ENCODE measurements at regions of chr12 and their contacts with region 1.

Region 1: GRCh38 chr12:12786716-12787601 is 1.5 kb downstream of the APOLD1 start:
- DNase-seq: peak; percentile 75
- H3K4me3 Mint-ChIP-seq: peak overlapping the region; percentile 81
- H3K27ac Mint-ChIP-seq: peak overlapping the region; percentile 75
- H3K4me1 Mint-ChIP-seq: peaks cover 5% of the 10 kb centered on the region
- H3K27me3 Mint-ChIP-seq: no peaks in the 10 kb centered on the region
- CTCF ChIP-seq: peak; percentile 17

Region 2: DNA sequence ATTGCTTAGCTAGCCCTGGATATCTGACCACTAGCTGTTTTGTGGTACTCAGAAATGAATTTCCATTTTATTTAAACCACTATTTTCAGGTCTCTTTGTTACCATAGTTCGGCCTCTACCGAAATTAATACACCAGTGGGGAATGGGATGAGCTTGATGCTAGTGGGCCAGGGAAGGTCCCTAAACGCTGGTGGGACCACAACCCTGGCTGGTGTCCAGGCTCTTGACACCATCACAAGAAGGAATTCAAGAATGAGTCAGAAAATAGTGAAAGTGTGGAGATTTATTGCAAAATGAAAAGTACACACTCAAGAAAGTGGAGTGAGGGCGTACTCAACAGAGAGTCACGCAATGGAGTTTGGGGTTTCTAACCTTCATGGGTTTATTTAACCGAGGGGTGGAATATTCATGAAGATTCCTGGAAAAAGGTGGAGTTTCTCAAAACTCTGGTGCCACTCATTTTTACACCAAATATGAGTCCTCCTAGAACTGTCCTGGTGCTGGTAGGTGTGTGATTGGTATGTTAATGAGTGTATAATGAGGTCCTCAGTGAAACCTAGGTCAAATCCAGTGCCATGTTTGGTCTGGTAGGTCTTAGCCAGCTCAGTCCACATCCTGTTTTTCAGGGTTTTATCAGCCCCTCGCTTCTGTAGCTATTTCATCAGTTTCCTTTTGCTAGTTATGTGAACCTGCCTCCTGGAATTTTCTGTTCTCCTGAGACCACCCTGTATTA is 481.2 kb before region 1 on chr12:
- CTCF ChIA-PET with region 1: no interaction called
- POLR2A ChIA-PET with region 1: no interaction called
- intact Hi-C with region 1: no loop called
- DNase-seq: no peak
- H3K4me3 Mint-ChIP-seq: no peak overlapping the region
- H3K27ac Mint-ChIP-seq: no peak overlapping the region
- H3K4me1 Mint-ChIP-seq: no peaks in the 10 kb centered on the region
- H3K27me3 Mint-ChIP-seq: no peaks in the 10 kb centered on the region
- CTCF ChIP-seq: no peak

Region 3: DNA sequence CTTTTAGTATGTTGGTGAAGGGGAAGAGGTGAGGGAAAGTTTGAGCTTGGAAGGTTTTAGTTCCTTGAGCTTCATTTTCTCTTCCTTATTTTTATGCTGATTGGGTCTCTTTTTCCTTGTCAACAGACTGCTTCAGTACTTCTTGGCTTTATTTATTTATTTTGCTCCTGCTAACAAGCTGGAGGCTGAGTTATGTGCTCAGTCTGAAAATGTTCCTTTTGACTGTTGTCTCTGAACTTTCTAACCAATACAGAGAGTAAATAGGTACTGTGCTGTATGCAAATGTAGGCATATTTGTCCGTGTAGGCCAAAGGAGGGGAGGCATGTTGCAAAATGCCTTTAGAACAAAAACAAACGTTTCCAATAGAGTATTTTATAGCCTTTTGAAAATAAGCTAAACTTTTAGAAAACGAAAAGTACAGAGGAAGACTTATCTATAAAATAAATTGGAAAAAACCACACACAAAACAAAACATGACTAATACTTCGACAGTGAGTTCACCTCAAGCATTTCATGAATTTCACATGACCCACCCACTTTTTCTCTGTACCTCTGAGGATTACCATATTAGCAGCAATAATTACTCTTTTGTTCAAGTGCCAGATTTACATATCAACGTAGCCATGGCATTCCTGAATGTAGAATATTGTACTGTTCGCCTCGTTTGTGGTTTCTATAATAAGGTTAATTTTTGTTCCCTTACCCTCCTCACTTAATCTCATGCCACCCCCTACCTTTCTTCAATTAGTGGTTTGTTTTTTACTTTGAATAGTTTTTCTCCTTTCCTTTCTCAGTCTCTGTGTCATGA is 180.0 kb before region 1 on chr12:
- CTCF ChIA-PET with region 1: no interaction called
- POLR2A ChIA-PET with region 1: no interaction called
- intact Hi-C with region 1: no loop called
- DNase-seq: peak; percentile 46
- H3K4me3 Mint-ChIP-seq: peak overlapping the region; percentile 2
- H3K27ac Mint-ChIP-seq: peak overlapping the region; percentile 66
- H3K4me1 Mint-ChIP-seq: peaks cover 19% of the 10 kb centered on the region
- H3K27me3 Mint-ChIP-seq: no peaks in the 10 kb centered on the region
- CTCF ChIP-seq: no peak

Region 4: DNA sequence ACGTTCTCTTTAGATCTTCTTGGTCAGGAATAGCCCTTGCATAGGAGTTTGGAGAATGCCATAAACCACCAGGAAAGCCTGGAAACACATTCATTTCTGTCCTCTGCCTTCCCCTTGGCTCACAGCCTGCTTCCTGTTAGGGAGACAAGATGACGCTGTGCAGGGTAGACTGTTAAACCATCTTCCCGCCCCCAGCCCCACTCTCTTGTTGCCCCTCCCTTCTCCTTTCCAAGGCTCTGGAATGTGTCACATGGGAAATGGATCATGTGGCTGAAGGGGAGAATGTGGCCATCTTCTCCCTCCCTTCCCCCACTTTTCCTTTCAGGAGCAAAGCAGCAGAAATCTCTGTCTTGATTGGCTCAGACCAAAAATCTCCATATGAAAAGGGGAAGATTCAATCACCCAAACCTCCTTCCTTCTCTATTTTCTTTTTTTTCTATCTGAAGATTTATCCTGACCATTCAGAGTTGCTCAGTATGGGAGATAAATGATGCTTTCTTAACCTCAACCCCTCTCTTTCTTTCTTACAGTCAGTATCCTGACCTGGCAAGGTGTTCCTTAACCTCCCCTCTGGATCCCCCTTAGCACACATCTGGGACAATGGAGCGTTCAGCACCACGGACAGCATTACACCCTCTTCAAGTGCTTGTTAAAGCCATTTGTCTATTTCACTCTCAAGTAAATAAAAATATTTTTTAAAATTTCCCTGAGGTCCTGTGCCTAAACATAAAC is 102.4 kb before region 1 on chr12:
- CTCF ChIA-PET with region 1: no interaction called
- POLR2A ChIA-PET with region 1: no interaction called
- intact Hi-C with region 1: no loop called
- DNase-seq: peak; percentile 59
- H3K4me3 Mint-ChIP-seq: no peak overlapping the region
- H3K27ac Mint-ChIP-seq: no peak overlapping the region
- H3K4me1 Mint-ChIP-seq: no peaks in the 10 kb centered on the region
- H3K27me3 Mint-ChIP-seq: no peaks in the 10 kb centered on the region
- CTCF ChIP-seq: no peak

Region 5: DNA sequence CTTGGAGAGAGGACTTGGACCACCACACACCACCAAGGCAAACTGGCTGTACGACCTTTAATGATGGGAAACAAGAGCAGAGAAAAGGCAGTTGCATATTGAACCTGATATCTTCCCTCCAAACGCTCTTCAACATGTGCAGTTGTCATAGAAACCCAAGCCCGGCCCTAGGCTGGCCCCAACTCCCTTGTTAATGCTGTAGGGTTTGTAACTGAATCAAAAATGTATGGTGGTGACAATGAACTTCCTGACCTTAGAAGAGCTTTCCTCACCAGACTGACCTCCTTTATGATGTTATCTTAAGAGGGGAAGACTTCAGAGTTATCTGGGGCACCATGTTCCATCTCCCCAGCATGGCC is 10.8 kb after region 1 on chr12:
- CTCF ChIA-PET with region 1: interaction called, 62 read pairs
- POLR2A ChIA-PET with region 1: interaction called, 41 read pairs
- intact Hi-C with region 1: no loop called
- DNase-seq: no peak
- H3K4me3 Mint-ChIP-seq: no peak overlapping the region
- H3K27ac Mint-ChIP-seq: no peak overlapping the region
- H3K4me1 Mint-ChIP-seq: peaks cover 14% of the 10 kb centered on the region
- H3K27me3 Mint-ChIP-seq: no peaks in the 10 kb centered on the region
- CTCF ChIP-seq: no peak

Region 6: DNA sequence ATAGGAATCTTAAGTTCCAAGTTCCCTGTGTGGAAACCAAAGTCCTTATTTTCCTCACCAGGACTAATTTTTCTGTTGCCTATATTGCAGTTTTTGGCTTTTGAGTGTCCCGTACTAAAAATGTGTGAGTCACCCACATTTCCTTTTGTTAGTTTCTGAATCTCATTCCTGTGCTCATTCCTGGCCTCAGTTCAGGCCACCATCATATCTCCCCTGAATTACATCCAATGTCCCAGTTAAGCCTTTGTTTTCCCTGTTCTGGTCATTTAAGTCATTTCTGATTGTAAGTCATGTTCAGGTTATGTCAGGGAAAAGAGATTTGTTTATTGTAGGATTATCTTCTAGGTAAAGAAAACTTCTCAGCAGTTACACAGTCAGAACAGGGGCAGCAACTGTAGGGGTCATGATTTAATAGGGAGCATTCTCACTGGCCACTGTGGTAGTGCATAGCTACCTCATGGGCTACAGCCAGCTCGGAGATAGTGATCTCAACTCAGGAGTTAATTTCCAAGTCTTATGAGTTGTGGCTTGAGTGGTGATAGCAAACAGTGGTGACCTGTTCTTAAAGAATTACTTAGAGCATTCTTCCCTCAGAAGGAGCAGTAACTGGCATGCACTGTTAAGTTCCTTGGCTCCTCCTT is 32.8 kb after region 1 on chr12:
- CTCF ChIA-PET with region 1: interaction called, 49 read pairs
- POLR2A ChIA-PET with region 1: interaction called, 45 read pairs
- intact Hi-C with region 1: no loop called
- DNase-seq: peak; percentile 53
- H3K4me3 Mint-ChIP-seq: peak overlapping the region; percentile 27
- H3K27ac Mint-ChIP-seq: peak overlapping the region; percentile 71
- H3K4me1 Mint-ChIP-seq: peaks cover 44% of the 10 kb centered on the region
- H3K27me3 Mint-ChIP-seq: no peaks in the 10 kb centered on the region
- CTCF ChIP-seq: no peak

Region 7: GRCh38 chr12:12870454-12870853 is 83.5 kb after region 1 on chr12:
- CTCF ChIA-PET with region 1: no interaction called
- POLR2A ChIA-PET with region 1: no interaction called
- intact Hi-C with region 1: no loop called
- DNase-seq: peak; percentile 58
- H3K4me3 Mint-ChIP-seq: no peak overlapping the region
- H3K27ac Mint-ChIP-seq: peak overlapping the region; percentile 11
- H3K4me1 Mint-ChIP-seq: peaks cover 28% of the 10 kb centered on the region
- H3K27me3 Mint-ChIP-seq: no peaks in the 10 kb centered on the region
- CTCF ChIP-seq: no peak

Region 8: GRCh38 chr12:12916135-12916944 is 129.4 kb after region 1 on chr12:
- CTCF ChIA-PET with region 1: interaction called, 8 read pairs
- POLR2A ChIA-PET with region 1: no interaction called
- intact Hi-C with region 1: loop called (anchors 2 kb)
- DNase-seq: peak; percentile 83
- H3K4me3 Mint-ChIP-seq: no peak overlapping the region
- H3K27ac Mint-ChIP-seq: no peak overlapping the region
- H3K4me1 Mint-ChIP-seq: no peaks in the 10 kb centered on the region
- H3K27me3 Mint-ChIP-seq: no peaks in the 10 kb centered on the region
- CTCF ChIP-seq: peak; percentile 92

Region 9: DNA sequence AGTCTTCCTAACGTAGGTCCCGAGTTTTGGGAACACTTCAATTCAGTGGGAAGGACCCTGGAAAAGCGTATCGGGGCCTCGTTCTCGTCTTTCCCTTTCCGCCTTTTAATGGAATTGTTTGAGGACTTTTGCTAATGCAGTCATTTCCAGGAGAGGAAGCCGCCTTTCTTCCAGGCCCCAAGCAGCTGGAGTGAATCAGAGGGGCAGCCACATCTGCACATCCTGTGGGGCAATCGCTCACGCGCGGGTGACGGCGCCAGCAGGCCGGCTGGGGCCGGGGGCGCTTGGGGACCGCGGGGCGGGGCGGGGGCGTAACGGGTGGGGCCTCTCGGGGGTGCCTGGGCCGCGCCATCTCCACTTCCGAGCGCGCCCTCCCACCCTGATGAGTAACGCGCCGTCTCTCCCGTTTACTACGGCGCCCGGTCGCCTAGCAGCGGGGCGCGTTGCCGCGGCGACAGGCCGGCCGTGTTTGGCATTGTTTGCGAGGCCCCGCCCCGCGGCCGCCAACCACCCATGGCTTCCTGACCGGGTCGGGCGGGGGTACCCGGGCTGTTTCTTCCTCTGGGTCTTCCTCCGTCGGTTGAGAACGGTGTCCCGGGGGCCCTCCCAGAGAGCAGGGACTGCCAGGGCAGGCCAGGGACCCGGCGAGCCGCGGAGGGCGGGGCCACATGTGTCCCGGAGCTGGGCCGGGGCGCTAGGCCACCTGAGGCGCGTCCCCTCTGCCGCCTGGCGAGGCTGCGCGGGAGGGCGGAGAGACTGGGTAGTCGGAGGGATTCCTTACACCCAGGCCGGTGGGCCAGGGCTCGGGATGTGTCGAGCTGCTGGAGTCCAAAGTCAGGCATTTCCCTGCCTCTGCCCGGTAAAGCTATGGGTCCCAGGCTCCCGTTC is 314.2 kb after region 1 on chr12:
- CTCF ChIA-PET with region 1: no interaction called
- POLR2A ChIA-PET with region 1: interaction called, 3 read pairs
- intact Hi-C with region 1: loop called (anchors 5 kb)
- DNase-seq: peak; percentile 90
- H3K4me3 Mint-ChIP-seq: peak overlapping the region; percentile 38
- H3K27ac Mint-ChIP-seq: peak overlapping the region; percentile 99
- H3K4me1 Mint-ChIP-seq: peaks cover 62% of the 10 kb centered on the region
- H3K27me3 Mint-ChIP-seq: no peaks in the 10 kb centered on the region
- CTCF ChIP-seq: no peak